ENCODE measurements at regions of chr3 and their contacts with region 1.

Region 1: GRCh38 chr3:25849641-25850385 is 59.9 kb downstream of the OXSM start:
- DNase-seq: no peak
- H3K4me3 Mint-ChIP-seq: no peak overlapping the region
- H3K27ac Mint-ChIP-seq: no peak overlapping the region
- H3K4me1 Mint-ChIP-seq: peaks cover 9% of the 10 kb centered on the region
- H3K27me3 Mint-ChIP-seq: peaks cover 4% of the 10 kb centered on the region

Region 2: DNA sequence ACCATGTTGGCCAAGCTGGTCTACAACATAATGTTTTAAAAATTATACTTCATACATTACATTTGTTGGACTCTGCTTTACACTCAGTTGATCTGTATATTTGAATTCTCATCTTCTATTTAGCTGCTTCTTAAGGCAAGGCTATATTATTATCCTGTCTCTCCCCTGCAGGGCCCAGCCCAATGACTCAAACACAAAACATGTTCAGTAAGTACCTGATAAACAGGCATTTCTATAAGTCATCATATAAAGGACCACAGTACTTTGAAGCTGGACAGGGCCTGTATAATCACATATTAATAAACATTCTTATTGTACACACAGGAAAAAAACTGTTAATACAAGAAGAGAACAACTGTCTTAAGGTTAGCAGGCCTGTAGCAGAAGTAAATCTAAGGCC is 102.8 kb before region 1 on chr3:
- intact Hi-C with region 1: loop called (anchors 5 kb)
- DNase-seq: no peak
- H3K4me3 Mint-ChIP-seq: no peak overlapping the region
- H3K27ac Mint-ChIP-seq: no peak overlapping the region
- H3K4me1 Mint-ChIP-seq: peaks cover 5% of the 10 kb centered on the region
- H3K27me3 Mint-ChIP-seq: no peaks in the 10 kb centered on the region

Region 3: DNA sequence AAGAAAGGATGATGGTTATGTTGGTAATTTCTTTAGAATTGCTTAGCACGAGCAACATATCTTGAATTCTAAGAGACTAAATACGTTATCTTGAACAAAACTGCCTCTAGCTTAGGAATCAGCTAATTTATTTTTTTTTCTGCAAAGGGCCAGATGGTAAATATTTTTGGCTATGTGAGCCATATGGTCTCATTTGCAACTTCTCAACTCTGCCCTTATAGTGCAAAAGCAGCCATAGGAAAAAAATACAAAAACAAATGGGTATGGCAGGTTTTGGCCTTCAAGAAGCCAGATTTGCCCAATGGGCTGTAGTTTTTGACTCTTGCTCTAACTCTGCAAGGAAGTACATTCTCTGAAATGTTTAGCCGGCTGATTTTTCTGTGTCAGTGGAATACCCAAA is 48.0 kb before region 1 on chr3:
- intact Hi-C with region 1: no loop called
- DNase-seq: no peak
- H3K4me3 Mint-ChIP-seq: no peak overlapping the region
- H3K27ac Mint-ChIP-seq: no peak overlapping the region
- H3K4me1 Mint-ChIP-seq: peaks cover 1% of the 10 kb centered on the region
- H3K27me3 Mint-ChIP-seq: peaks cover 11% of the 10 kb centered on the region

Region 4: GRCh38 chr3:25916276-25916675 is 66.5 kb after region 1 on chr3:
- intact Hi-C with region 1: no loop called
- DNase-seq: no peak
- H3K4me3 Mint-ChIP-seq: no peak overlapping the region
- H3K27ac Mint-ChIP-seq: no peak overlapping the region
- H3K4me1 Mint-ChIP-seq: peaks cover 5% of the 10 kb centered on the region
- H3K27me3 Mint-ChIP-seq: peaks cover 2% of the 10 kb centered on the region